ENCODE measurements at regions of chr10 and their contacts with region 1.

Region 1: GRCh38 chr10:110803830-110804338 is 67.8 kb upstream of the PDCD4 start:
- DNase-seq: peak; percentile 64
- ATAC-seq: peak; percentile 77
- H3K4me3 Mint-ChIP-seq: peak overlapping the region; percentile 2
- H3K27ac Mint-ChIP-seq: peak overlapping the region; percentile 80
- H3K4me1 Mint-ChIP-seq: peaks cover 40% of the 10 kb centered on the region
- H3K27me3 Mint-ChIP-seq: no peaks in the 10 kb centered on the region

Region 2: GRCh38 chr10:110706690-110707098 is 97.2 kb before region 1 on chr10:
- CTCF ChIA-PET with region 1: no interaction called
- POLR2A ChIA-PET with region 1: no interaction called
- DNase-seq: no peak
- ATAC-seq: no peak
- H3K4me3 Mint-ChIP-seq: no peak overlapping the region
- H3K27ac Mint-ChIP-seq: no peak overlapping the region
- H3K4me1 Mint-ChIP-seq: no peaks in the 10 kb centered on the region
- H3K27me3 Mint-ChIP-seq: peaks cover 13% of the 10 kb centered on the region

Region 3: GRCh38 chr10:110746254-110746826 is 57.5 kb before region 1 on chr10:
- CTCF ChIA-PET with region 1: interaction called, 27 read pairs
- POLR2A ChIA-PET with region 1: no interaction called
- DNase-seq: peak; percentile 67
- ATAC-seq: no peak
- H3K4me3 Mint-ChIP-seq: no peak overlapping the region
- H3K27ac Mint-ChIP-seq: no peak overlapping the region
- H3K4me1 Mint-ChIP-seq: peaks cover 54% of the 10 kb centered on the region
- H3K27me3 Mint-ChIP-seq: no peaks in the 10 kb centered on the region

Region 4: GRCh38 chr10:110793128-110793812 is 10.6 kb before region 1 on chr10:
- CTCF ChIA-PET with region 1: interaction called, 12 read pairs
- POLR2A ChIA-PET with region 1: interaction called, 3 read pairs
- DNase-seq: no peak
- ATAC-seq: no peak
- H3K4me3 Mint-ChIP-seq: no peak overlapping the region
- H3K27ac Mint-ChIP-seq: no peak overlapping the region
- H3K4me1 Mint-ChIP-seq: no peaks in the 10 kb centered on the region
- H3K27me3 Mint-ChIP-seq: no peaks in the 10 kb centered on the region

Region 5: GRCh38 chr10:110834629-110835301 is 30.9 kb after region 1 on chr10:
- CTCF ChIA-PET with region 1: interaction called, 23 read pairs
- POLR2A ChIA-PET with region 1: interaction called, 3 read pairs
- DNase-seq: peak; percentile 58
- ATAC-seq: peak; percentile 73
- H3K4me3 Mint-ChIP-seq: no peak overlapping the region
- H3K27ac Mint-ChIP-seq: peak overlapping the region; percentile 81
- H3K4me1 Mint-ChIP-seq: peaks cover 32% of the 10 kb centered on the region
- H3K27me3 Mint-ChIP-seq: no peaks in the 10 kb centered on the region

Region 6: GRCh38 chr10:110857265-110858158 is 53.6 kb after region 1 on chr10:
- CTCF ChIA-PET with region 1: interaction called, 46 read pairs
- POLR2A ChIA-PET with region 1: interaction called, 4 read pairs
- DNase-seq: peak; percentile 21
- ATAC-seq: no peak
- H3K4me3 Mint-ChIP-seq: peak overlapping the region; percentile 45
- H3K27ac Mint-ChIP-seq: peak overlapping the region; percentile 60
- H3K4me1 Mint-ChIP-seq: peaks cover 84% of the 10 kb centered on the region
- H3K27me3 Mint-ChIP-seq: no peaks in the 10 kb centered on the region

Region 7: GRCh38 chr10:110871298-110872084 is 67.6 kb after region 1 on chr10 and contains the start of gene PDCD4:
- CTCF ChIA-PET with region 1: interaction called, 16 read pairs
- POLR2A ChIA-PET with region 1: interaction called, 12 read pairs
- DNase-seq: peak; percentile 96
- ATAC-seq: peak; percentile 83
- H3K4me3 Mint-ChIP-seq: peak within 1 kb of the TSS; percentile 89
- H3K27ac Mint-ChIP-seq: peak within 1 kb of the TSS; percentile 96
- H3K4me1 Mint-ChIP-seq: peaks cover 69% of the 10 kb centered on the region
- H3K27me3 Mint-ChIP-seq: no peaks in the 10 kb centered on the region
- total RNA-seq, gene PDCD4: 97.1 to 98.4 TPM

Region 8: GRCh38 chr10:110893559-110894179 is 89.8 kb after region 1 on chr10:
- CTCF ChIA-PET with region 1: interaction called, 88 read pairs
- POLR2A ChIA-PET with region 1: no interaction called
- DNase-seq: no peak
- ATAC-seq: peak; percentile 79
- H3K4me3 Mint-ChIP-seq: no peak overlapping the region
- H3K27ac Mint-ChIP-seq: no peak overlapping the region
- H3K4me1 Mint-ChIP-seq: peaks cover 14% of the 10 kb centered on the region
- H3K27me3 Mint-ChIP-seq: no peaks in the 10 kb centered on the region